Sigmoid colon (tissue), 7 donors: ENCODE measurements at regions of chr11 and their contacts with region 1.

Region 1: GRCh38 chr11:61899146-61899841 is 7.9 kb upstream of the FADS3 start:
- DNase-seq: peak; percentile 91
- H3K4me3 ChIP-seq: no peak overlapping the region
- H3K27ac ChIP-seq: peak overlapping the region in 3 of 4 donors; percentile 2 to 21 (median 10)
- H3K4me1 ChIP-seq: peaks cover 0 to 3% (median 0%) of the 10 kb centered on the region in 4 donors
- H3K27me3 ChIP-seq: no peaks in the 10 kb centered on the region
- CTCF ChIP-seq: peak; percentile 98 to 100 (median 99)
- EP300 ChIP-seq: no peak
- POLR2A ChIP-seq: no peak

Region 2: GRCh38 chr11:61947486-61948210 is 48.4 kb after region 1 on chr11:
- intact Hi-C with region 1: loop called (anchors 1 kb)
- DNase-seq: peak; percentile 95
- H3K4me3 ChIP-seq: no peak overlapping the region
- H3K27ac ChIP-seq: no peak overlapping the region
- H3K4me1 ChIP-seq: peaks cover 0 to 31% (median 22%) of the 10 kb centered on the region in 4 donors
- H3K27me3 ChIP-seq: no peaks in the 10 kb centered on the region
- CTCF ChIP-seq: peak; percentile 78 to 92 (median 86)
- EP300 ChIP-seq: no peak
- POLR2A ChIP-seq: no peak

Region 3: DNA sequence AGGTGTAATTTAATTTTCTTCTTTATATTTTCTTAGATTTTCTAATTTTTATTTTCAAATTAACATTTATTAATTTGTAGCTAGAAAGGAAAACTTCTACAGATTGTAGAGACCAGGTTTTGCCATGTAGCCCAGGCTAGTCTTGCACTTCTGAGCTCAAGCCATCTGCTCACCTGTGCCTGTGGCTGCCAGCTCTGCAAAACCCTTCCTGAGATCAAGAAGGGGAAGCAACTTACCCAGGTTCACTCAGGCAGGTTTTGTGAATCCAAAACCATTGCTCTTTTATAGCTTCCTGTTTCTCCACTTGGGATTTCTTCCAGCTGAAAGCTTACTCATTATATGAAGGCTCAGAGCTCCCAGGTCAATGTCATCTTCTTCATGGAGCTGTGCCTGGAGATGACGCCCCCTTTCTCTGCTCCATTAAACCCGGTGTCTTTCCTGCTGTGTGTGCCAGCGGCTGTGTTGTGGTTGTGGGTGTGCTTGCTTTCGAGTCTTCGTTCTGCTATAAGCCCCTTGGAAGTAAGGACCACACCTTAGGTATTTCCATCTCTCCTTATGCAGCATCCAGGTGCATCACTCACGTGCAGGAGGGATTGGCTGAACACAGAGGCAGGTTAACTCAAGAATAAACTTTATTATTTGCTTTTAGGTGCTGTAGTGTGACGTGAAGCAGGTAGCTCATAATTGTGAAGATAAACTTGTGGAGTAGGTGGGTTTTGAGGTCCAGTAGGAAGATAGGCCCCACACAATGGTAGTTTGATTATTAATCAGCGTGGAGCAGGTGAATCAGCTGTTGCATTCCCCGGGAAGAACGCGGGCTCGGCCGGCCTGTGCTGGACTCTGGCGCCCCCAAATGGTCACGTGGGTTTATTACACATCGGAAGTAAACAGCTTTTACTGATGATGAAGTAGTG is 182.3 kb after region 1 on chr11:
- intact Hi-C with region 1: loop called (anchors 1 kb)
- DNase-seq: peak; percentile 89
- H3K4me3 ChIP-seq: no peak overlapping the region
- H3K27ac ChIP-seq: peak overlapping the region in 1 of 4 donors; percentile 11
- H3K4me1 ChIP-seq: peaks cover 0 to 6% (median 3%) of the 10 kb centered on the region in 4 donors
- H3K27me3 ChIP-seq: no peaks in the 10 kb centered on the region
- CTCF ChIP-seq: peak; percentile 85 to 92 (median 87)
- EP300 ChIP-seq: no peak
- POLR2A ChIP-seq: no peak

Region 4: DNA sequence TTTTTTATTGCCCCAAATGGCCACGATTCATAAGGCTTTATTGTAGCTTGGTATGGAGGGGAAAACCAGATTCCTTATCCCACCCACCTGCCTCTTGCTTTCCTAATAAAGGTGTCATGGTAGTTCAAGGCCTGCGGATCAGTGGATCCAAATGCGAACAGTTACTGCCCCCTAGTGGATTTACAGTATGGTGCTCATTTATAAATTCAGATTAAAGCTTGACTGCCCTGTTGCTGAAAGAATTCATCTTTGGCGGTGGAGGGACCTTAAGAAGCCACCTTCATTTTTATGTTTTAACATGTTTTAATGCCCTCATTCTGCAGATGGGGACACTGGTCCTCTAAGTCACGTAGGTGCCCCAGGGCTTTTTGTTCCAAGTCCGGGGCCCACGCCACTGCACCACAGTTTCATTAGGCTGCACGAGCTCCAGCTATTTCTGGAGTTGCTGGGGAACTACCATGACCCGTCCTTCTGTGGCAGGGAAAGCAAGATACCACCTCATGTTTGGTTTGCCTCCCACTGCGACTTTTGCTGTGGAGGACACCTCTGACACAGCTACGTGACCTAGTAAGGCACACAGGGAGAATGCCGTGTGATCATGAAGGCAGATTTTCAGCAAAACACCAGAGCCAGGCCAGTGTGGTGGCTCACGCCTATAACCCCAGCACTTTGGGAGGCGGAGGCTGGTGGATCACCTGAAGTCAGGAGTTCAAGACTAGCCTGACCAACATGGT is 208.9 kb after region 1 on chr11:
- intact Hi-C with region 1: loop called (anchors 2 kb)
- DNase-seq: no peak
- H3K4me3 ChIP-seq: no peak overlapping the region
- H3K27ac ChIP-seq: no peak overlapping the region
- H3K4me1 ChIP-seq: peaks cover 0 to 39% (median 29%) of the 10 kb centered on the region in 4 donors
- H3K27me3 ChIP-seq: no peaks in the 10 kb centered on the region
- CTCF ChIP-seq: peak; percentile 59 to 86 (median 79)
- EP300 ChIP-seq: no peak
- POLR2A ChIP-seq: no peak